ENCODE measurements at regions of chr2 and their contacts with region 1.

Region 1: GRCh38 chr2:216539714-216540241 is 41.1 kb downstream of the RPL37A start:
- DNase-seq: peak; percentile 85 to 88
- H3K4me3 ChIP-seq: no peak overlapping the region
- H3K27ac ChIP-seq: peak overlapping the region; percentile 60
- H3K4me1 ChIP-seq: peaks cover 52% of the 10 kb centered on the region
- H3K27me3 ChIP-seq: no peaks in the 10 kb centered on the region
- CTCF ChIP-seq: no peak

Region 2: GRCh38 chr2:216576616-216577015 is 36.8 kb after region 1 on chr2:
- CTCF ChIA-PET with region 1: no interaction called
- POLR2A ChIA-PET with region 1: no interaction called
- intact Hi-C with region 1: loop called (anchors 2 kb)
- DNase-seq: no peak
- H3K4me3 ChIP-seq: no peak overlapping the region
- H3K27ac ChIP-seq: no peak overlapping the region
- H3K4me1 ChIP-seq: peaks cover 30% of the 10 kb centered on the region
- H3K27me3 ChIP-seq: no peaks in the 10 kb centered on the region
- CTCF ChIP-seq: no peak

Region 3: DNA sequence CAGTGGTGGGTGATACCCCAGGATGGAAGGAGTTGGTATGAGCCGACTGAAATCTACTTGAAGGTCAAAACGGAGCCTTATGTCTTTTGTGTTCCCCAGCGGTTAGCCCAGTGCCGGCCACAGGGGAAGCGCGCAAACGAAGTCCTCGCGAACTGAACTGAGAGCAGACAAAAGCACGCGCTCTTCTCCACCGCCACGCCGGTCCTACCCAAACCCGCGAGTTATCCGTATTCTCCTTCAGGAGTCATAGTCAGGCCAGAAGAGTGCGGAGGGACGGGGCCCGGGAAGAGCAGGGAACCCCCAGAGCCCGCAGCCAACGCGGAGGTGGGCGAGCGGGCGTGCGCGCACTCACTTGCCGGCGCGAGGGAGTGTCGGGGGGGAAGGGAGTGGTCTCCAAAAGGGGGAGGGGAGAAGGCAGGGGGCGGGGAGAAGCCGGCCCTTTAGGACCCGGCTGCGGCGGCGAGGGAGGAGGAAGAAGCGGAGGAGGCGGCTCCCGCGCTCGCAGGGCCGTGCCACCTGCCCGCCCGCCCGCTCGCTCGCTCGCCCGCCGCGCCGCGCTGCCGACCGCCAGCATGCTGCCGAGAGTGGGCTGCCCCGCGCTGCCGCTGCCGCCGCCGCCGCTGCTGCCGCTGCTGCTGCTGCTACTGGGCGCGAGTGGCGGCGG is 93.3 kb after region 1 on chr2 and contains the start of gene IGFBP2:
- CTCF ChIA-PET with region 1: no interaction called
- POLR2A ChIA-PET with region 1: no interaction called
- intact Hi-C with region 1: loop called (anchors 5 kb)
- DNase-seq: peak in 1 of 2 experiments; percentile 53
- H3K4me3 ChIP-seq: peak within 1 kb of the TSS; percentile 56
- H3K27ac ChIP-seq: no peak within 1 kb of the TSS
- H3K4me1 ChIP-seq: peaks cover 43% of the 10 kb centered on the region
- H3K27me3 ChIP-seq: no peaks in the 10 kb centered on the region
- CTCF ChIP-seq: no peak
- total RNA-seq, gene IGFBP2: 106 and 133 TPM in 2 replicates

Measured in PC-9 (cell line).